Lower leg skin (tissue), 4 donors: ENCODE measurements at regions of chr18 and their contacts with region 1.

Region 1: DNA sequence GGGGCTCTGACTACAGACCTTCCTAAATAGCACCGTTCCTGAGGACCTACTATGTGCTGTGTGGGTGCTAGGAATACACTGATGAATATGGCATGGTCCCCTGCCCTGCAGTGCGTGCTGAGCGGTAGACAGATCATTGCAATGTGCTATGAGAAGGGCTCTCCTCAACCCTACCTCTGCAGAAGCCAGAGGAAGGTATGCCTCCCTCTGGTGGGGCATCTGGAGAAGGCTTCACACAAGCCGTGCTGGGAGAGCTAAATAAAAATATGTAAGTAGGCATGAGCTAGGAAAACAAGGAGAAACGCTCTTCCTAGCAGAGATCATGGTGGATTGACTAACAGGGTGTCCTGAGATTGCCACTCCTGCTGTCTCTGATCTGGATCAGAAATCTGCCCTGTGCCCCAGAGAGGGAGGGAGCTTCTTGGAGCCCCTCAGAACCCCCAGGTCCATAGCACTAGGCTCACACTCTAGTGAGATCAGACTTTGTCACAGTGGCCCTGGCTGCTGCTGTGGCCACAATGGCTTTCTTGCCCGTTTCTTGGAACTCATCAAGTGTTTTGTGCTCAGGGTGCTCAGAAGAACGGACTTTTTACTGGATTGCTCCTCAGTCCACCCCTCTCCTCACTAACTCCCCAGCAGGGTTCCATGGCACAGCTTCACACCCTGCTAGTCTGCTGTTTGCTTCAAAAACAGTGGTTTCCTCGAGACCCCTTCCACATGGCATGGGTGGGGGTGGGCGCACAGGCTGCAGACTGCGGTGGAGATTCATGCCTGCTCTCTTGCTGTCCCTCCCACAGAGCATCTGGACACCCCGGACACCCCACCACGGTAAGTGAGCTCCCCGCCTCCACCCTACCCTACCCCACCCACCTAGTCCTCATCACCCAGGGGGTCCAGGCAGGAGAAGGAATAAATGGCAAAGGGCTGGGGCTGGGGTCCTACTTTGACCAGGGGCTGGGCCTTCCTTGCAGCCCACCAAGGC is 14.2 kb downstream of the SIGLEC15 start:
- DNase-seq: no peak
- H3K4me3 ChIP-seq: no peak overlapping the region
- CTCF ChIP-seq: no peak
- POLR2A ChIP-seq: no peak

Region 2: GRCh38 chr18:45449418-45450227 is 390.1 kb before region 1 on chr18:
- intact Hi-C with region 1: loop called (anchors 5 kb)
- DNase-seq: peak in 1 of 2 donors; percentile 35
- H3K4me3 ChIP-seq: no peak overlapping the region
- CTCF ChIP-seq: no peak
- POLR2A ChIP-seq: no peak

Region 3: DNA sequence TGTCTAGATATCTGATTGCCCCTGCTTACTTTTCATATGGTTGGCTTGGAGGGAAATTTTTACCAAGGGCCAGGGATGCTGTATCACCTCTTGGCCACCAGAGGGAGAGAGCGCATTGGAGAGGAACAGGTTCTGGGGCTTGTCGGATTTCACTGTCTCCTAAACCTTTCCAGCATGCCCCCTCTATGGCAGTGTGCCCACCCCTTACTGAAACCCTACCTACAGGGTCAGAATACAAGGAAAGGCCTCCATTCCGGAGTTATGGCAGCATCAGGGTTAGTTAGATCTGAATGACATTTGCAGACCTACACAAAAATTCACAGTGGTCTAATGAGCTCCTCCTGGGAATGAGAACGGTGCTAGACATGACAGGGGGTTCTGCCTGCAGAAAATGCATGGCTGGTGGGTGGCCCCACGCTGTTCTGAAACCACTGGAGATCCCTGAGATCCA is 218.6 kb before region 1 on chr18:
- intact Hi-C with region 1: no loop called
- DNase-seq: peak in 1 of 2 donors; percentile 46
- H3K4me3 ChIP-seq: no peak overlapping the region
- CTCF ChIP-seq: peak in 1 of 3 donors; percentile 71
- POLR2A ChIP-seq: no peak

Region 4: GRCh38 chr18:45670281-45670962 is 169.3 kb before region 1 on chr18:
- intact Hi-C with region 1: loop called (anchors 10 kb)
- DNase-seq: peak in 1 of 2 donors; percentile 83
- H3K4me3 ChIP-seq: no peak overlapping the region
- CTCF ChIP-seq: no peak
- POLR2A ChIP-seq: no peak